Posterior vena cava (tissue), 2 donors: ENCODE measurements at regions of chr5 and their contacts with region 1.

Region 1: DNA sequence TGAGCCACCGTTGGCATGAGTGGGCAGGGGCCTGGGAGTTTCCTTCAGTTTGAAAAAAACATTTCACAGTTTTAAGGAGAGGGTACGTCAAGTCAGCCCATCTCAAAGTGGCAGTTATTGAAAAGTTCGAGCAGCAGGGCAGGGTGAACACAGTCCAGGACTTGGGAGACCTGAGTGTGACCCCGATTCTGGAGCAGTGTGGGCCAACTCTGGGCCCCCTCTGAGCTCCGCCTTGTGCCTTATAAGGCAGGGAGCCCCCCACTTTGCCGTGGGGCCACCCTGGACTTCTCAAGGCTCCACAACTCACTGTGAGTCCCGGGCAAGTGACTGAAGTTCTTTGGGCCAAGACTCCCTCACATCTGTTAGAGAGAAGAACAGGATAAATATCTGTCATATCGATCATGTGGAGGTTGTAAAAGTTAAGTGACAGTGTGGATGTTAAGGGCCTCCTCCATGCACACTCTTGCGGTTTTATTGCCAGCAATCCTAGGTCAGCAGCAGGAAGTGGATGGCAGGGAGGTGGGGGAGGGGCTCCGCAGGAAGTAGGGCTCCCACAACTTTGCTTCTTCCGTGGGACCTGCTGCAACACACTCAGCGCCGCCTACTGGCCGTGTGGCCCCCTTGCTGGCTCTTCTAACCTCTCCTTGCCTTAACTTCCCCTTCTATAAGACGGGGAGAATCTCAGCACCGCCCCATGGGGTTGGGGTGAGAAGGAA is 38.4 kb downstream of the HRH2 start:
- DNase-seq: peak; percentile 95

Region 2: GRCh38 chr5:175148636-175149173 is 547.6 kb before region 1 on chr5:
- intact Hi-C with region 1: no loop called
- DNase-seq: no peak

Region 3: DNA sequence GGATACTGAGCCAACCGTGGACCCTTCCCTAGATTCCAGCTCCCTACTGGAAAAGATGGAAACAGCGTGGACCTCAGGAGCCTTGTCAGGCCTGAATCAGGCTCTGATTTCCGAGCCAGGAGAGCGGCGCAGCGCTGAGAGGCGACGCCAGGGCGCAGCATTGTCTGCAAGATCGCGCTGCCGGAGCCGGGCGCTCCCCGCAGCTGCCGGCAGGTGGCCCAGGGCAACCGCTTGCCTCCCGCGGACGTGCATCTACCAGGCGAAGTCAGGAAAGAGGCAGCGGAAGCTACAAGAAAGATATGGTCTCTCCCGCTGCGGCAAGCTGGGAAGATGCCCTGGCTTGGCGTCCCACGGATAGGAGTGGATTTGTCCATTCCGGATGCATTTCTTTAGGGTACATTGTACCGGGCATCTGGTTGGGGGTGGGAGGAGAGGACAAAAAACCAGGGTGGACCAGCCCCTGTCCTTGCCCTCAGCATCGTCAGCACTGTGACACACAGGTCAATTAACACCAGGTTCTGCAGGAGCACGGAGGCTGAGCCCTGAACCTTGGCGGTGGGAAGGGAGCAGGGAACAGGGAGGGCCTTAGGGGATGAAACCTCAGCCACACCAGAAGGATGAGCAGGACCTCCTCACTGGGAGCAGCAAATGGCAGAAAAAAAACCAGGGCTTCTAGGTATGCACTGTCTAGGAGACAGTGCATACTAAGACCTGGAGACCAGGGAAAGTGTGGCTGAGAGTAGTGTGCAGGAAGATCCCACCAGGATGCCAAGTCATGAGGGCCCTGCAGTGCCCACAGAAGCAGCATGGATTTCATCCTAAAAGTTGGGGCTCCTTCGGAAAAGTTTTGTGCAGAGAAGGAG is 162.0 kb before region 1 on chr5:
- intact Hi-C with region 1: loop called in 1 of 2 experiments (anchors 10 kb)
- DNase-seq: peak; percentile 95

Region 4: DNA sequence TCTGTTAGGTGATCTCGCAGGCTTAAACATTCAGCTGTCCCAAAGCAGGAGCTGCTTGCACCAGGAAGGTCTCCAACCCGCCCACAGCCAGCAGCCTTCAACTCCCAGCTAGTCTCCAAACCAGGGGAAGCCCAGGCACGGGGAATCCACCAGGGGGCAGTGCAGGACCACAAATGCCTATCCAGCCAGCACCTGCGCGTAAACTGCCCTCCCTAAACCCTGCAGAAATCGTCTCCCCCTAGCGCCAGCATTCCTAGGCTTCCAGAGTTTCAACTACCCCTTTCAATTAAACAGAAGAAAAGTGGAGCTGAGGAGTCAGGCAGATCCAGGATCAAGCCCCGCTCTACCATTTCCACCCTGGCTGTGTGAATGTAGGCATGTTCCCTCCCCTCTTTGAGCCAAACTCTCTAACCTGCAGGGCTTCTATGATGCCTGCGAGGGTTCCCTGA is 33.6 kb after region 1 on chr5:
- intact Hi-C with region 1: no loop called
- DNase-seq: peak; percentile 96

Region 5: DNA sequence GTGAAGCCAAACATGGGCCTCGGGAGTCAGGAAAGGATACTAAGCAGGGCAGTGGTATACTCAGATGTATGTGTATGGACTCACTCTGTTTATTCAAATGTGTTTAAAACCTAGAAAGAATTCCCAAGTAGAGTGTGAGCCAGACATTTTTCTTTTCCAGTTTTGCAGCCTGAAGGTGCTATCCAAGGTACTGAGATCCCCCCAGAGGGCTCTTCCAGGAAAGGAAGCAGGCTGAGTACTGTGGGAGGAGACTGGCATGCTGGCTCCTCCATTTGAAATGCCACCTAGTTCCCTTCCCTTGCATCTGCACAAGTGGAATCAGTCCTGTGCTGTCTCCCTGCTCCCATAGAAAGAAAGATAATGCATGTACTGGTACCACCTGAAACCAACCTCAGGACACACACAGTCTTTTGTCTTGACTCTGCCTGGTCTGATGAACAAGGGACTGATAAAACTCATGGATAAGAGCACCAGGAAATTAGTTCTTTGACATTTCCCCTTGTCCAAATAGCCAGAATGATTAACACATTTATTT is 47.4 kb after region 1 on chr5:
- intact Hi-C with region 1: loop called in 1 of 2 experiments (anchors 1 kb)
- DNase-seq: no peak

Region 6: DNA sequence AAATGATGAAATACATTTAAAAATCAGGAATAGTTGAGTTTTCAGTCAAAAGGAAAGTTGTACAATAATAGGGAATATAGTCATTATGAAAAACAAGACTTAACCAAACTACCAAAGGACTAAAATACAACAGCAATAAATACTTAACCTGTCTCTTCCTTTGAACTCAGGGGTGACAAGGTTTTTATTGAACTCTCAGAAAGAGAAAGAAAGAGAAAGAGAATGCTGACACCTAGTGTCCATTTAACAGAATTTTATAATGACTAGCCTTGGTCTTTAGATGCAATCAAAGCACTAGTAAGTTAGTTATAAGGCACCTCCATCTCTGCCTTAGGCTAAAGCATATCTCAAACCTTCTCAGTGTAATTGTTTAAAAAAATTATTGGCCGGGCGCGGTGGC is 1262.8 kb after region 1 on chr5:
- intact Hi-C with region 1: no loop called
- DNase-seq: no peak